ENCODE measurements at regions of chr4 and their contacts with region 1.

Region 1: DNA sequence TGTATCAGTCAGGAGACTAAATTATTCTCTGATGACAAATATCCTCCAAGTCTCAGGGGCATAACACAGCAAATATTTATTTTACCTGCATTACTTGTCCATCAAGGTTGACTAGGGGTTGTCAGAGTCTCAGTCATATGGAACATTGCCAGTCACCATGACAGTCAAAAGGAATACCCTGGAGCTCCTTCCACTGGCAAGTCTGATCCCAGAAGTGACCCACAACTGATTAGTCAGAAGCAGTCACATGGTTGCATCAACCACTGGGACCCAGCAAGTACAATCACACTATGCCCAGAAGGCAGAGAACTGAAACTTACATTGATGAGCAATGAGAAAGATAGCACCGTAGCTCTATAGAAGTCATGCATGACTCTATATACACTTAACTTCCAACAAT is 41.9 kb upstream of the SOD3 start:
- DNase-seq: peak; percentile 70 to 99
- H3K4me3 ChIP-seq: no peak overlapping the region
- H3K27ac ChIP-seq: peak overlapping the region; percentile 95
- H3K4me1 ChIP-seq: peaks cover 24% of the 10 kb centered on the region
- H3K27me3 ChIP-seq: no peaks in the 10 kb centered on the region
- CTCF ChIP-seq: no peak

Region 2: GRCh38 chr4:24768604-24769003 is 15.1 kb after region 1 on chr4:
- CTCF ChIA-PET with region 1: no interaction called
- POLR2A ChIA-PET with region 1: no interaction called
- intact Hi-C with region 1: loop called (anchors 1 kb)
- DNase-seq: no peak
- H3K4me3 ChIP-seq: no peak overlapping the region
- H3K27ac ChIP-seq: no peak overlapping the region
- H3K4me1 ChIP-seq: peaks cover 21% of the 10 kb centered on the region
- H3K27me3 ChIP-seq: no peaks in the 10 kb centered on the region
- CTCF ChIP-seq: no peak

Region 3: DNA sequence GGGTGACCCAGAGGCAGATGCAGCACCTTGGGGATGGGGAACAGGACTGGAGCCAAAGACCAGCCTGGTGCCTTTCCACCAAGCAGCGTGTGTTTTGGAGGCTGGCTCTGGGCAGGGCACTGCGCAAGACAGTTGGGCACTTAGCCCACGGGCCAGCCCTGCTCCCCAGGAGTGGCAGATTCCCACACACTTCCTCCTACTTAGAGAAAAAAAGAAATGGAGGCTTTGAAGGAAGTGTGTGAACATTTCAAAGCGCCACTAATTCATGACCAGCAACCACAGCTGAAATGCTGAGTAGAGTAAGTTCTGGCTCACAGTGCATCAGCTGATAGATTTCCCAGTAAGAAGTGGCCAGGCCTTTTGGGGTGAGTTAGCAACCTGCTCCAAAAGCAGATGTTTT is 332.2 kb after region 1 on chr4:
- CTCF ChIA-PET with region 1: no interaction called
- POLR2A ChIA-PET with region 1: no interaction called
- intact Hi-C with region 1: no loop called
- DNase-seq: no peak
- H3K4me3 ChIP-seq: no peak overlapping the region
- H3K27ac ChIP-seq: no peak overlapping the region
- H3K4me1 ChIP-seq: no peaks in the 10 kb centered on the region
- H3K27me3 ChIP-seq: peaks cover 44% of the 10 kb centered on the region; the same call in 1 of the 2 replicates
- CTCF ChIP-seq: no peak

Region 4: DNA sequence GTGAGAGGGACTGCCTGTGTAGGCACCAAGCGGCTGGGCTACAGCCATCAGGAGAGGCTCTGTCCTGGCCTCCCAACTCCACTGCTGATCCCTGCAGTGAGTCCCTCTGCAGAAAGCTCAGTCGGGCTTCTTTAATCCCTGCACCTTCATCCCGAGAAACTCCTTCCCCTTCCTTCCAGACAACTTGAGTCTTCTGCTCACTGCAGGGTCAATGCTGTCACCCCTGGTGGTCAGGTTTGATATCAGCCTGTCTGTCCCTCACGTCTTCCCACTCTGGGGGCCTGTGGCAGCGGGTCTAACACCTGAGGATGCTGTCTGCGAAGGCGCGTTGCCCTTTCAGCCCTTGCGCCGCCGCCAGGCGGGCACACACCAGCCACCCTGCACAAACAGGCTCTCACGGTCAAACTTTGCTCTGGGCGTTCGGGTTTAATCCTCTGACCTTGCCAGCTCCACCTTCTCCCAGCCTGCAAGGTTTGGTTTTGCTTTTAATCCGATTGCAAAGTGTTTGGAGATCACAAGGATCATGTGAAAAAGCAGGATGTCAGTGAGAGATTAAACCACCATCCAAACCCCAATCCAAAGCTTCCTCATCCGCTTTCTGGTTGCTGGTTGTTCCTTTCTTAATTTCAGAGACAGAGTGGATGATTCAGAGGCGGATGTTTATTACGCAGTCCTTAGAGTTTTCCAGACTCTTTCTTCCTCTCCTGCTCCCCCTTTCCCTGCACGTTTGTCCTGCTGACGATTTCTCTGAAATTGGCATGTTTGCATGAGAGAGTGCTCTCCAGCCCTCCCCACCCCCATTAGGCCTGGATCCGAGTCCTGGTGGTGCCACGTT is 827.4 kb after region 1 on chr4:
- CTCF ChIA-PET with region 1: no interaction called
- POLR2A ChIA-PET with region 1: no interaction called
- intact Hi-C with region 1: no loop called
- DNase-seq: no peak
- H3K4me3 ChIP-seq: no peak overlapping the region
- H3K27ac ChIP-seq: no peak overlapping the region
- H3K4me1 ChIP-seq: no peaks in the 10 kb centered on the region
- H3K27me3 ChIP-seq: no peaks in the 10 kb centered on the region
- CTCF ChIP-seq: no peak